Endothelial cell of umbilical vein (primary cell): ENCODE measurements at regions of chr3 and their contacts with region 1.

Region 1: GRCh38 chr3:61561374-61562041 is at the start of gene PTPRG:
- DNase-seq: peak; percentile 95
- H3K4me3 ChIP-seq: peak within 1 kb of the TSS; percentile 64 to 93 (median 82)
- H3K27ac ChIP-seq: peak within 1 kb of the TSS; percentile 76
- H3K4me1 ChIP-seq: peaks cover 30% of the 10 kb centered on the region
- H3K27me3 ChIP-seq: no peaks in the 10 kb centered on the region
- CTCF ChIP-seq: no peak
- POLR2A ChIP-seq: peak; percentile 92
- total RNA-seq, gene PTPRG: 37.5 and 39.1 TPM in 2 replicates

Region 2: GRCh38 chr3:61574854-61575253 is 13.3 kb after region 1 on chr3:
- CTCF ChIA-PET with region 1: interaction called, 20 read pairs
- POLR2A ChIA-PET with region 1: interaction called, 3 read pairs
- dilution Hi-C with region 1: no loop called
- intact Hi-C with region 1: no loop called
- DNase-seq: no peak
- H3K4me3 ChIP-seq: no peak overlapping the region
- H3K27ac ChIP-seq: no peak overlapping the region
- H3K4me1 ChIP-seq: peaks cover 3% of the 10 kb centered on the region
- H3K27me3 ChIP-seq: no peaks in the 10 kb centered on the region
- CTCF ChIP-seq: no peak
- POLR2A ChIP-seq: no peak

Region 3: GRCh38 chr3:61725851-61726333 is 164.4 kb after region 1 on chr3:
- CTCF ChIA-PET with region 1: no interaction called
- POLR2A ChIA-PET with region 1: no interaction called
- dilution Hi-C with region 1: no loop called
- intact Hi-C with region 1: no loop called
- DNase-seq: no peak
- H3K4me3 ChIP-seq: no peak overlapping the region
- H3K27ac ChIP-seq: no peak overlapping the region
- H3K4me1 ChIP-seq: no peaks in the 10 kb centered on the region
- H3K27me3 ChIP-seq: no peaks in the 10 kb centered on the region
- CTCF ChIP-seq: no peak
- POLR2A ChIP-seq: no peak

Region 4: DNA sequence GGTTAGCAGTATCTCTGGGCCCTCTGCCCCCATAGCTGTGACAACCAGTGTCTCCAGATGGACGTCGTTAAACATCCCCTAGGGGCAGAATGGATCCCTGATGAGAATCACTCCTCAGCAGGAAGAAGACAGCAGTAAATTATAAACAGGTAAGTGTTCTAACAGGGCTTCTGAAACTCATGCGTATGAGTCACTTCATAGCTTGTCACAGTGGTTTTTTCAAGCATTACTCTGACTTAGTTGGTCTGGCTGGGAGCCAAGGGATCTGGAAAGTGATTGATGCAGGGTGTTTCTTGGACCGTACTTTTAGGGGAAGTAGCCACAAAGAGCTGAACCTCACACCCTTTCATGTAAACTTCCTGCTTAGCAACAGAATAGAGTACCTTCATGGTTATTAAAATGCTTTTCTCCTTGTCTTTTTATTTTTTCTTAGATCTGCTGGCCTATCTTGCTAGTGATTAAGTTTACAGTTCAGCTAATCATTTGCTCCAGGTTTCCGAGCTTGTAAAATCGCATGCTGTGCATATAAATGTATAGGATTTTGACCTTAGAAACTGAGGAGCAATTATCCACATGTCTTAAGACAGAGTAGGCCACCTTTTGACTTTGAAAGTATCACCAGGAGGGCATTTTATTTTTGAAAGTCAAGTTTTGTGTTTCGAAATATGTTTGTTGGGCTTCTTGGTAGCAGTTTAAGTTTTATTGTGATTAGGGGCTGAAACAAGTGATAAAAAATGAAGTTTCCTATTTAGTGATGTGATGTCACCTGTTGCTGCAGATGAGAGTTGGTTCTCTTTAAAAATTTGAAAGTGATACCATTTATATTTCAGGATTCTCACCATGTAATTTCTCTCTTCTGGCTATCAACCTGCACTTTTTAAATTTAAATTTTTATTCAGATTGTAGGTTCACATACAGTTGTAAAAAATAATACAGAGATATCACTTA is 333.8 kb after region 1 on chr3:
- CTCF ChIA-PET with region 1: interaction called, 12 read pairs
- POLR2A ChIA-PET with region 1: no interaction called
- dilution Hi-C with region 1: no loop called
- intact Hi-C with region 1: no loop called
- DNase-seq: peak; percentile 93
- H3K4me3 ChIP-seq: no peak overlapping the region
- H3K27ac ChIP-seq: no peak overlapping the region
- H3K4me1 ChIP-seq: peaks cover 11% of the 10 kb centered on the region
- H3K27me3 ChIP-seq: no peaks in the 10 kb centered on the region
- CTCF ChIP-seq: no peak
- POLR2A ChIP-seq: no peak

Region 5: GRCh38 chr3:61979638-61980037 is 418.1 kb after region 1 on chr3:
- CTCF ChIA-PET with region 1: no interaction called
- POLR2A ChIA-PET with region 1: no interaction called
- dilution Hi-C with region 1: no loop called
- intact Hi-C with region 1: loop called (anchors 2 kb)
- DNase-seq: peak; percentile 80
- H3K4me3 ChIP-seq: no peak overlapping the region
- H3K27ac ChIP-seq: peak overlapping the region; percentile 85
- H3K4me1 ChIP-seq: peaks cover 35% of the 10 kb centered on the region
- H3K27me3 ChIP-seq: no peaks in the 10 kb centered on the region
- CTCF ChIP-seq: no peak
- POLR2A ChIP-seq: peak; percentile 64

Region 6: DNA sequence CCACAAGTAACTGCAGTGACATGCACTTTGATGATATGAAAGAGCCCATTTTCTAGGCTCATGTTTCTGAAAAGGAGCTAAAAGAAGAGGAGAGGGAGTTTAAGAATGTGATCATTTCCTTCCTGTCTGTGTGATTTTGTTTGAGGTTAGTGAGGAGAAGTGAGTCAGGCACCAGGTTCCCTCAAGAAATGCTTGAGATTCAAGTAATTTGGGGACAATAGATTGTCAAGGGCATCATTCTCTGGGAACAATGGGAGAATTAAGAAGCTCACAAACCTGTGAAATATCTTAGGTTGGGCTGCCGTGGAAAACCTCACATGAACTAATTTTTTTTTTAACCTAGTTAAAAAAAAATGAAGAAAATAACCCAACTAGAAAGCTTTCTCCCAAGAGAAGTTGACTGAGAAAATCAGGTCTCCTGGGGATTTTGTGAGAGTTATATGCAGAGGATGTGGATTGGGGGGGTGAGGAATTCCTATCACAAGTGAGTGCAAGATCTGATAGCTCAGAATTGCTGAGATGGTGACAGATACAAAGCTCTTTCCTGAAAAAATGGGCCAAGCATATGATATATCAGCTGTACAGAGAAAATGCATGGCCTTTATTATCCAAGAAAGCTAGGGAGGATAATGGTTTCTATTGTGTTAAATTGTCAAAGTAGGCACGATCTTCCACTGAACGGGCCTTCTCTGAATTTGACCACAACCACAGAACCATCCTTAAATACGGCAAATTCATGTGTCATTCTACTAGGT is 608.6 kb after region 1 on chr3:
- CTCF ChIA-PET with region 1: interaction called, 9 read pairs
- POLR2A ChIA-PET with region 1: interaction called, 3 read pairs
- dilution Hi-C with region 1: no loop called
- intact Hi-C with region 1: loop called (anchors 1 kb)
- DNase-seq: peak; percentile 74
- H3K4me3 ChIP-seq: no peak overlapping the region
- H3K27ac ChIP-seq: peak overlapping the region; percentile 95
- H3K4me1 ChIP-seq: peaks cover 21% of the 10 kb centered on the region
- H3K27me3 ChIP-seq: no peaks in the 10 kb centered on the region
- CTCF ChIP-seq: no peak
- POLR2A ChIP-seq: no peak